Posterior vena cava (tissue), 2 donors: ENCODE measurements at regions of chr15 and their contacts with region 1.

Region 1: DNA sequence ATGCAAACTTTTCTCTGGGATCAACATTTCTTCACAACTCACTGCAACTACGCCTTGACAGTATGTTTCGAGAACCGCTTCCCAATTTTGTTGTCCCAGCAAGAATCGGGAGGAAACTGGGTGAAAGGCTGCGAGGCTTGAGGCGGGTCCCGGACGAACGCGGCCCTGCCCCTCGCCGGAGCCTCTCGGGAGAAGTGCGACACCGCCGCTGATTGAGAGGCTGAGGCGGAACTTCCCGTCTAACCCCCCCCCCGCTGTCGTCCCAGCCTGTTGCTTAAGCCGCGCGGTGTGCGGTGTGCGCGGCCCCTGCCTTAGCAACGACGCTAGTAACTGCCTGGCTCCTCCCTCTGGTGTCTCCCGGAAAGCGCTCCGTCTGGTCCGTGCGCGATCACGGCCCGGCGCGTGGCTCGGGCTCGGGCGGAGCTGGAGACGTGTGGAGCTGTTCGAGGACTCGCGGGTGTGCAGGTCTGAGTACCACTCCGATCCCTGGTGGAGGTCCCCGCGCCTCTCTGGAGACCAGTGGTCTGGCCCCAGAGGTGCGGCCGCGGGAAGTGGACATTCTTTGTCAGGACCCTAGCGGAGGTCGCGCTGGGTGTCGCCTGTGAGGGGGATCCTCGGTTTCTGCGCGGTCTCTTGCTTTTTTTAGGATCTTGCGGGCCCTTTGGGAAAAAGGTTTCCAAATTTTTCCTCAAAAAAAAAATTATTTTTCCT is at the starts of genes DTWD1 and FAM227B:
- DNase-seq: peak; percentile 99
- total RNA-seq, gene DTWD1: 45.2 to 49.1 TPM
- total RNA-seq, gene FAM227B: 3.9 to 8.0 TPM

Region 2: GRCh38 chr15:49421991-49422390 is 198.8 kb before region 1 on chr15:
- intact Hi-C with region 1: loop called in 1 of 2 experiments (anchors 10 kb)
- DNase-seq: peak; percentile 76

Region 3: DNA sequence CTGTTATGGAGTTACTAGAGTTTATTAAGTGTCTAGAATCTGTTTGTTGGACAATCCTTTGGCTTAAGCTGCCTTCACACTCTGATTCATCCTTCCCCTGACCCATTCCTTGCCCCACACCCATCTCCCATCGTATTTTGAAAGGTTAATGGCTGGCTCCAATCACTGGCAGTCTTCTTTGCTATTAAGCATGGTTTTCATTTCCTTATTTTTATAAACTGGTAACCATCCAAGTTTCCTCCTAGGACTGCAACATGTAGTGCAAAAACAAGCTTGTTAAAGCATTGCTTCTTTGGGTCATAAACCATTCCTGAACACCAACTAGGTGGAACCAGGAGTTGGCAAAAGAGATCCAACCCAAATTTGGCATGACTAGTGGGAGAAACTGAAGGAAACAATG is 148.4 kb after region 1 on chr15:
- intact Hi-C with region 1: no loop called
- DNase-seq: no peak

Region 4: DNA sequence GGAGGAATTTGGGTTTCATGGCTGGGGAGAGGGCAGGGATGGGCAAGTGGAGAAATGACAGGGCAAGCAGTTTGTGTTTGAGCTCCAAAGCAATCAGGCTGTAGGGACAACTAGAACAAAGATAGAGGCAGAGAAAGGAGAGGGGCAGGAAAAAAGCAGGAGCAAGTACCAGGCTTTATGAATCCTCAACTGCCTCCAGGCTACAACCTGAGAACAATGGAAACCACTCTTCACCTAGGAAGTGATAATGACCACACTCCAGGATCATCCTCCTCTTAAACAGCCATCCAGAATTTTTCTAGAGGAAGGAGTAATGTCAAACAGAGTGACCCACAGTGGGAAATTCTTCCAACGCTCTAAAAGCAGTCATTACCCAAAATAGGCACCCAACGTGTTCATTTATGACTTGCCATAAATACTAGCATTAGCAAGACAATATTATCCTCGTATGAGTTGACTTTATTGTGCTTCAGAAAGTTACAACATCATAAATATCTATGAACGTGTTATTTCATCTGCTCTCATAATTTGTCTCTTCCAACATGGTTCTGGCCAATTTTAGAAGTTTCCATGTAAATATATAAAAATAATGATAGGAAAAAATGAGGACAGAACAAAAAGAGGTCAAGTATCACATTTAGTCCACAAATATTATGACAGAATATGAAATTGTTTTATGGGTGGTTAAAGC is 1423.4 kb after region 1 on chr15:
- intact Hi-C with region 1: loop called in 1 of 2 experiments (anchors 5 kb)
- DNase-seq: no peak